ENCODE measurements at regions of chr3 and their contacts with region 1.

Region 1: GRCh38 chr3:132038198-132038825 is 3.5 kb upstream of the CPNE4 start:
- DNase-seq: no peak
- H3K4me3 ChIP-seq: no peak overlapping the region
- H3K4me3 Mint-ChIP-seq: no peak overlapping the region
- H3K27ac Mint-ChIP-seq: no peak overlapping the region
- H3K4me1 ChIP-seq: no peaks in the 10 kb centered on the region
- H3K4me1 Mint-ChIP-seq: no peaks in the 10 kb centered on the region
- H3K27me3 ChIP-seq: no peaks in the 10 kb centered on the region
- H3K27me3 Mint-ChIP-seq: peaks cover 13% of the 10 kb centered on the region
- CTCF ChIP-seq: peak in 1 of 2 experiments; percentile 63

Region 2: GRCh38 chr3:132180337-132180791 is 142.1 kb after region 1 on chr3:
- CTCF ChIA-PET with region 1: no interaction called
- POLR2A ChIA-PET with region 1: no interaction called
- intact Hi-C with region 1: loop called (anchors 1 kb)
- DNase-seq: peak in 1 of 2 experiments; percentile 41
- H3K4me3 ChIP-seq: no peak overlapping the region
- H3K4me3 Mint-ChIP-seq: no peak overlapping the region
- H3K27ac Mint-ChIP-seq: no peak overlapping the region
- H3K4me1 ChIP-seq: no peaks in the 10 kb centered on the region
- H3K4me1 Mint-ChIP-seq: no peaks in the 10 kb centered on the region
- H3K27me3 ChIP-seq: no peaks in the 10 kb centered on the region
- H3K27me3 Mint-ChIP-seq: peaks cover 9% of the 10 kb centered on the region
- CTCF ChIP-seq: peak; percentile 55 to 59

Region 3: GRCh38 chr3:132210476-132211346 is 172.4 kb after region 1 on chr3:
- CTCF ChIA-PET with region 1: interaction called, 10 read pairs
- POLR2A ChIA-PET with region 1: no interaction called
- intact Hi-C with region 1: loop called (anchors 1 kb)
- DNase-seq: peak; percentile 37 to 47
- H3K4me3 ChIP-seq: no peak overlapping the region
- H3K4me3 Mint-ChIP-seq: no peak overlapping the region
- H3K27ac Mint-ChIP-seq: no peak overlapping the region
- H3K4me1 ChIP-seq: no peaks in the 10 kb centered on the region
- H3K4me1 Mint-ChIP-seq: no peaks in the 10 kb centered on the region
- H3K27me3 ChIP-seq: no peaks in the 10 kb centered on the region
- H3K27me3 Mint-ChIP-seq: peaks cover 11% of the 10 kb centered on the region
- CTCF ChIP-seq: peak; percentile 62 to 83

Measured in Caco-2 (cell line).